CD8-positive, alpha-beta memory T cell (primary cell): ENCODE measurements at regions of chr17 and their contacts with region 1.

Region 1: DNA sequence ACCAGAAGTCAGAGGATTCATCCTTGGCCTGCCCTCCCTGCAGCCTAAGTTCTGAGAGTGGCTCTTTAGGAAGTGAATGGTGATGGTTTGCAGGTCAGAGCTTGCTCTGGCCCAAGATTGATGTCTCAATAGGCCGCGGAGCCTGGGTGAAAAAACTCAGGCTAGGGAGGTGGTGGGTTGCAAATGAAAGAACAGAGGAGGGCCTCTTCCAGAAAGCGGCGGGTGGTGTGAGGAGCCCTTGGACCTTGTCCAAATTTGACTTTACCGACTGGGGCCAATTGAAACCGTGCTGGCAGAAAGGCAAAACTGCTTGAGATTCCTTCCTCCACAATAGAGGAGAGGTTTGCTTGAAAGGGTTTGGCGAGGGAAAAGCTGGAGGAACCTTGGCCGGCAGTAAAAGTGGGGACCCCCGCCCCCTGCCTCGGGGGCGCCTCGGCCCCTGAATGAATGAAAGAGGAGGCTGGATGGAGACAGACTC is 331.3 kb downstream of the SEC14L1 start:
- DNase-seq: no peak
- H3K4me3 ChIP-seq: peak overlapping the region; percentile 35
- H3K4me3 Mint-ChIP-seq: peak overlapping the region; percentile 7 to 92 (median 64)
- H3K27ac ChIP-seq: peak overlapping the region; percentile 12
- H3K27ac Mint-ChIP-seq: peak overlapping the region; percentile 67 to 96 (median 86)
- H3K4me1 ChIP-seq: peaks cover 98% of the 10 kb centered on the region
- H3K4me1 Mint-ChIP-seq: peaks cover 91 to 99% (median 92%) of the 10 kb centered on the region in 3 donors
- H3K27me3 ChIP-seq: no peaks in the 10 kb centered on the region
- H3K27me3 Mint-ChIP-seq: no peaks in the 10 kb centered on the region

Region 2: DNA sequence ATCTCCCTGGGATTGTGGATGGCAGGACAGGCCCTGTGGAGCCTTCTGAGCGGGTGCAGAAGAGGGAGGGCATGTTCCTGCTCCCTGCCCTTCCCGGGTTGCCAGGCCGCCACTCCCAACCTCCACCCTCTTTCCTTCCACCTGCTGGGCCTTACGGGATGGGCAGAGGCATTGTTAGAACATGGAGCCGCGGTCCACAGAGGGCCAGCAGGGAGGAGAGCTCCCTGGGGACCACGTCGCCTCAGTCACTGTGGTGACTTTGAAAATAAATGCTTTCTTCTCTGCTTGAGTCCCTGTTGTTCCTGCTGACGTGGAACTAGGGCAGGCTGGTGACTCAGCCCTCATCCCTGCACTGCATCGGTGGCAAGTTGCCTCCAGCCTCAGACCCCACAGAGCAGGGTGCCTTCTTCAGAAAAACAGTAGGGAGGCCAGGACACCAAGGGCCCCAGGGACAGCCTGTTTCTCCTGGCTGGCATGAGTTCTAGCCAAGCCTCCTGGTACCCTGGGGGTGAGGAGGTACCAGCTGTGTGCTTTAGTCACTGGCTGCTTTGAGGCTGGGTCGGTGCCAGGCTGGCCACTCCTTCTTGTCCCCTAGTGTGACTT is 106.3 kb before region 1 on chr17:
- CTCF ChIA-PET with region 1: no interaction called
- POLR2A ChIA-PET with region 1: no interaction called
- DNase-seq: peak in 1 of 5 donors; percentile 50
- H3K4me3 ChIP-seq: no peak overlapping the region
- H3K4me3 Mint-ChIP-seq: no peak overlapping the region
- H3K27ac ChIP-seq: no peak overlapping the region
- H3K27ac Mint-ChIP-seq: peak overlapping the region in 2 of 8 donors; percentile 8 to 82
- H3K4me1 ChIP-seq: peaks cover 75% of the 10 kb centered on the region
- H3K4me1 Mint-ChIP-seq: peaks cover 45 to 61% (median 52%) of the 10 kb centered on the region in 3 donors
- H3K27me3 ChIP-seq: no peaks in the 10 kb centered on the region
- H3K27me3 Mint-ChIP-seq: no peaks in the 10 kb centered on the region

Region 3: DNA sequence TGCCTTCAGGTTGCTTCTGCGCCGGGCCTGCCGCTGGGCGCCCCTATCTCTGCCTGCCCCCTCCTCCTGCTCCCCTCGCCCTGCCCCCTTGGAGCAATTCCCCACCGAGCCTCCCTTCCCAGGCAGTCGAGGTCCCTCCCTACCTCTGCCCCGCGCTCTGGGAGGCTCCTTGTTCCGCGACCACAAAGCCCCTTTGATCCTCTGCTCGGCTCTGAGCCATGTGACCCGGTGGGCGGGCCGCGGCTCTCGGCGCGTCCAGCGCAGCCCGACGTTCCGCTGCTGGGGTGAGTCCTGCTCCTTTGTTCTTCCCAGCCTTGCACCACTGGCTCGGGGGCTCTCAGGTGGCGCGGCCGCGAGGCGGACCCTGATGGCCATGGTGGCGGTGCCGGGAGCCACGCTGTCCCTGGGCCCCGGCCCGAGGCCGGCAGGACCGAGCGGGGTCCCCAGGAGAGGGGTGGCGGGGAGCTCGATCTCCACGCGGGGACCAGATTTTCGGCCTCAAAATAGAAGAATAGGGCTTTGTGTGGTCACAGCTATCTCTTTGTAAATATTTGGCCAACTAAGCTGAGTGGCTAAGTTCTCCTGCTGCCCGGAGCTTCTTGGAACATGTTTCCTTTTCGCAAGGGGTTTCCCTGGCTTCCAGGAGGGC is 20.7 kb before region 1 on chr17:
- CTCF ChIA-PET with region 1: interaction called, 7 read pairs
- POLR2A ChIA-PET with region 1: interaction called, 11 read pairs
- DNase-seq: peak; percentile 60 to 80 (median 71)
- H3K4me3 ChIP-seq: peak overlapping the region; percentile 95
- H3K4me3 Mint-ChIP-seq: peak overlapping the region; percentile 89 to 99 (median 98)
- H3K27ac ChIP-seq: peak overlapping the region; percentile 77
- H3K27ac Mint-ChIP-seq: peak overlapping the region; percentile 85 to 100 (median 97)
- H3K4me1 ChIP-seq: peaks cover 57% of the 10 kb centered on the region
- H3K4me1 Mint-ChIP-seq: peaks cover 50 to 61% (median 59%) of the 10 kb centered on the region in 3 donors
- H3K27me3 ChIP-seq: no peaks in the 10 kb centered on the region
- H3K27me3 Mint-ChIP-seq: no peaks in the 10 kb centered on the region

Region 4: GRCh38 chr17:77482375-77483127 is 10.5 kb after region 1 on chr17:
- CTCF ChIA-PET with region 1: no interaction called
- POLR2A ChIA-PET with region 1: no interaction called
- DNase-seq: no peak
- H3K4me3 ChIP-seq: no peak overlapping the region
- H3K4me3 Mint-ChIP-seq: no peak overlapping the region
- H3K27ac ChIP-seq: no peak overlapping the region
- H3K27ac Mint-ChIP-seq: no peak overlapping the region
- H3K4me1 ChIP-seq: peaks cover 68% of the 10 kb centered on the region
- H3K4me1 Mint-ChIP-seq: peaks cover 26 to 49% (median 32%) of the 10 kb centered on the region in 3 donors
- H3K27me3 ChIP-seq: no peaks in the 10 kb centered on the region
- H3K27me3 Mint-ChIP-seq: no peaks in the 10 kb centered on the region

Region 5: DNA sequence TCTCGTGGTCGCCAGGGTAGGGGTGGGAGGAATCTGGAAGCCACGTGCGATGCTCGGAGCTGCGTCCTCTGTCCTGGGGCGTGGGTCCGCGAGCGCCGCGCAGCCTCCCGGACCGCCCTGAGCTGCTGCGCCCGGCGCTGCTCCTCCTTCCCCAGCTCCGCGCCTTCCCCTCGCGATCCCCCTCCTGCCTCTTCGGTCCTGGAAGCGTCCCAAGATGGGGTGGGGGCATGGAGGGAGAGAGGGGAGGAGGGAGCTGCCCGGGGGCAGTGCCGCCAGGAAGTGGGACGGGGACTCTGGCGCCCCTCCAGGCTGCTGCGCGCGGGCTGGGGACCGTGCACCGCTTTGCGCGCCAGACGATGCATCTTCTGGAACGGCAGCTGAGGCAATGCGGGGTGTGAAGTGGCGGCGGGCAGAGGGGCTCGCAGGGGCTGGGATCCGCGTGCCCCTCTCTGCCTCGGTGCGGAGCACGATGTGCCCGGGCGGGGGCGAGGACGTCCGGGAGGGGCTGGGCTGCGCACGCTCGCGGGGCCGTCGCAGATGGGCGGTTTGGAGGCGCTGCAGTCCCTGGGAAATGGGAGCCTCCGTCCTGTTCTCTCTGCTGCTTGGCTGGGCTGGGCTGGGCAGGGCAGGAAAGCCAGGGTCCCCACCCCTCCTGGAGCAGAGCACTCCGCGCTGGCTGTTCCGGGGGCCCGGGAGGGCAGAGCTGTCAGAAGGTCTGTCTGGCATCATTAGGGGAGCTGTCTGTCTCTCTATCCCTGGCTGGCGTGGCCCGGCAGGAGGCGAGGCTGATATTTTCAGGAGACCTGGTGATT is 56.7 kb after region 1 on chr17:
- CTCF ChIA-PET with region 1: no interaction called
- POLR2A ChIA-PET with region 1: no interaction called
- DNase-seq: peak in 1 of 5 donors; percentile 19
- H3K4me3 ChIP-seq: no peak overlapping the region
- H3K4me3 Mint-ChIP-seq: peak overlapping the region in 3 of 7 donors; percentile 12 to 82 (median 51)
- H3K27ac ChIP-seq: no peak overlapping the region
- H3K27ac Mint-ChIP-seq: no peak overlapping the region
- H3K4me1 ChIP-seq: no peaks in the 10 kb centered on the region
- H3K4me1 Mint-ChIP-seq: peaks cover 4 to 15% (median 5%) of the 10 kb centered on the region in 3 donors
- H3K27me3 ChIP-seq: peaks cover 7% of the 10 kb centered on the region
- H3K27me3 Mint-ChIP-seq: peaks cover 10 to 27% of the 10 kb centered on the region in 2 donors